BJ (cell line): ENCODE measurements at regions of chr18 and their contacts with region 1.

Region 1: DNA sequence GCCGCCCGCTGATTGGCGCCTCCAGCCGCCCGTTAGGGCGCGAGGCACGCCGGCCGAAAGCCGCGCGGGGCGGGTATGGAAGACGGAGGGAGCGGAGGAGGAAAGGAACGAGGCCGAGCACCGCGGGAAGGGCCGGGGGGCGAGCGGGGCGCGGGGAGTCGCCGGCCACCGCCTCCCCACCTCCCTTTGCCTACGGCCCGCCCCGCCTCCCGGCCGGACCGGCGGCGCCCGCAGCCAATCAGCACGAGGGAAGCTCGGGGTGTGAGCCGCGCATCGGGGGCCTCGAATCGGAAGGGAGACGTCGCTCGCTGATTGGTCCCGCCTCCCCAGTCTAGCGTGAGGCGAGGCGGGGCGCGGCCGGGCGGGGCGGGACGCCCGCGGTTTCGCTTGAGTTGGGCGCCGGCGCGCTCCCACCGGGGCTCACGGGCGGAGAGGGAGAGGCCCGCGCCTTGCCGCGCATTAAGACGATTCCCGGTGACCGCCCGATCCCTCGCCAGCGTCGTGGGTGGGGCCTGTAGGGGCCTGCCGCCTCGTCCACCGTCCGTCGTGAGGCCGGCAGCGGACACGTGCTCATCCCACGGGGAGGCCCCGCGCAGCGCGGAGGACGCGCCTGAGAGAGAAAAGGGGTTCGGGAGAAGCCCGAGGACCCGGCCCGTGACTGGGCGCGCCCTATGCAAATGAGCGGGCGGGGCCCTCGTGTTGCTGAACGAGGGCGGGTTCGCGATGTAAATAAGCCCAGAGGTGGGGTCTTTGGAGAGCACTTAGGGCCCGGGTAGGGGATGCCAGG is 665 bp upstream of the SMAD2 start:
- DNase-seq: peak; percentile 65
- H3K4me3 ChIP-seq: peak overlapping the region; percentile 94
- H3K27me3 ChIP-seq: peaks cover 5% of the 10 kb centered on the region
- CTCF ChIP-seq: no peak

Region 2: DNA sequence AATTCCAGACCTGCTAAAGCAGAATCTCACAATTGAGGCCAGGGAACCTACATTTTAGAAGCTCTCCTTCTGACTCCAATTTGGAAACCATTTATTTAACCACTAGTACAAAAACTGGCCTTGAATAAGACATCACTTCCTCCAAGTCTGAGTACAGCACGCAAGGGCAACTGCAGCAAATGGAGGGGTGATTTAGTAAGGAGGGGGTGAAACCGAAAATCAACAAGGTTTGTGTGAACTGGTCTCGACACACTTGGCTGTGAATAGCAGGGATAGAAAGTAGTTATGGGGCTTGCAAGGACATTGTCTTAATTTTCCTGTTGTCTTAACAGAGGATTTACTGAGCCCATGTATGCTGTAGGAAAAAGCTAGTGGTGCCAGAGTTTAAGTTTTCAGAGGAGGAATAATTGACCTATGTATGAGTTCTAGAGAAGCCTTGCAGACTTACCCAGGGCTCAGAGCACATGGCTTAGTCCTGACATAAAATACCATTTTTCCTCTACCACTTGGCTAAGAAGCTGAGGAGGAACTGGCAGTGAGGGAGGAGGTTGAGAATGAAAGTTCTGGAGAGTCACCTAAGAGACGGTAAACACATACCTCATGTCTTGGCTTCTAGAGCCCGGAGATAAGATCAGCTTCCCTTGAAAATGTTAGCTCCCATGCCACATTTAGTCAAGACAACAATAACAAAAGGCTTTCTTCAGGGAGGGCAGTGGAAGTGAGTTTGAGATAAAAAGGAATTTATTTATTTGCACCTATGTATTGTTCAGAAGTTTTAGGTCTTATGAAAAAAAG is 115.4 kb before region 1 on chr18:
- CTCF ChIA-PET with region 1: no interaction called
- POLR2A ChIA-PET with region 1: no interaction called
- DNase-seq: no peak
- H3K4me3 ChIP-seq: no peak overlapping the region
- H3K27me3 ChIP-seq: no peaks in the 10 kb centered on the region
- CTCF ChIP-seq: no peak

Region 3: GRCh38 chr18:47846431-47846830 is 84.7 kb before region 1 on chr18:
- CTCF ChIA-PET with region 1: no interaction called
- POLR2A ChIA-PET with region 1: interaction called, 14 read pairs
- DNase-seq: no peak
- H3K4me3 ChIP-seq: no peak overlapping the region
- H3K27me3 ChIP-seq: no peaks in the 10 kb centered on the region
- CTCF ChIP-seq: no peak

Region 4: DNA sequence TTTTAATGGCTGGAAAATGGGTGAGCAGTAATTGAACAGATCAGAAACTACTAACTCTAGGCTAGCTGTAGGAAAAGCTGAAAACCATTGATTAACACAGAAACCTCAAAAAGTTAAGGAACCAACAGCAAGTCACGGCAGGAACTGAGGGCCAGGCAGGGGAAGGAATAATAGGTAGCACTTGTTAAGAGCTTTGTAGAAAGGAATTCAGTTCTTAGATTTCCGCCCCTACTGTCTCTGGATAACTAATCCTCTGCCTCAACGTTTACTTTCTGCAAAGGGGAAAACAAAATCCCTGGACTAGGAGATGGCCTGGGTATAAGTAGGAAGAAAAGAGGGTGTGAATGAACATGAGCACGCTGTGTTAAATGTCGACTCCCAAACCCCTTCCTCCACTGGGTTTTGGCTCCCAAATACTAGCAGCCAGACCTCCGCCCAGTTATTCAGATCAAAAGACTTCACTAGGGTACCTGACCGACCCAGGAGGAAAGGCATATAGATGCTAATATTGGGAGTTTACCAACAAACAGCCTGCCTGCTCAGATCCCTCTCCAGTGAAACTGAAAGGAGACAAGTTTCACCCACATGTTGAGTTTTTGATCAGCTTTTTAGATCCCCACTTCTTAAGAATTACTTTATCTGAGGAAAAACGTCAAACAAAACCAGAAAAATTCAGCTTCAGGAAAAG is 13.1 kb before region 1 on chr18:
- CTCF ChIA-PET with region 1: interaction called, 3 read pairs
- POLR2A ChIA-PET with region 1: interaction called, 11 read pairs
- DNase-seq: no peak
- H3K4me3 ChIP-seq: no peak overlapping the region
- H3K27me3 ChIP-seq: no peaks in the 10 kb centered on the region
- CTCF ChIP-seq: no peak

Region 5: DNA sequence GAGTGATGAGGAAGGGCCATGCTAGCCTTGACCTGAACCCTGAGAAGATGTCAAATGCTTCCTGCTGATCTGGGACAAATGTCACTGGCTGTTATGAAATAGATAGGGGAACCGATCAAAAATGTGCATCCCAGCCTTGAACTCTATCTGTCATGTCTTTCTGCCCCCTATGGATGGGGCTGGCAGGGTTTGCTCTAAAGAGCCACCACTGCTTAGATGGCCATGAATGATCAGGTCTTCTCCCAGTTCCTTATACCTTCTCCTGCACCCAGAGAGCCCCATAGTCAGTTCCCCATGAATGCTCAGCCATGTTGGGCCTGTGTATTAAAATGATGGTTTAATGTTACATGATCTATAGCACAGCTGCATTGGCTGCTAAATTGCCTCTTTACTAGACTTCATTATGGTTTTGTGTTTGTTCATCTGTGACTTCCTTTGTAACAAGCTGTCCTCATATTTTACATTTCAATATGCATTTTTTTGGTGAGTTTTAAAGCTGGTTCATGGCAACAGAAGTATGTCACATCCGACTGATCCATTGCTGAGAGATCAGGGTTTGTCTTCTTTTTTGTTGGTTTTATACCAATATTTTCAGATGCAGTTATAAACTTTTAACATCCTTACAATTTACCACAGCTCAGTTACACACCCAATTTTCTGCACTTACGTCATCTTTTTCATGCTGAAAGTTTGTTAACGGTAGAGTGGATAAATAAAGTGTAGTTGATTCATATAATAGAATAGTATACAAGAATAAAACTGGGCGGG is 55.7 kb after region 1 on chr18:
- CTCF ChIA-PET with region 1: no interaction called
- POLR2A ChIA-PET with region 1: interaction called, 12 read pairs
- DNase-seq: no peak
- H3K4me3 ChIP-seq: no peak overlapping the region
- H3K27me3 ChIP-seq: no peaks in the 10 kb centered on the region; the same call in none of the 2 replicates
- CTCF ChIP-seq: no peak